Heart left ventricle (tissue), 16 donors: ENCODE measurements at regions of chr9 and their contacts with region 1.

Region 1: GRCh38 chr9:84261082-84261746 is 79.3 kb downstream of the SLC28A3 start:
- DNase-seq: peak; percentile 79 to 89 (median 83)
- ATAC-seq: peak; percentile 87 to 99 (median 97)
- H3K4me3 ChIP-seq: peak overlapping the region in 8 of 12 donors; percentile 1 to 49 (median 30)
- H3K27ac ChIP-seq: no peak overlapping the region
- H3K4me1 ChIP-seq: peaks cover 0 to 4% (median 0%) of the 10 kb centered on the region in 12 donors
- H3K27me3 ChIP-seq: no peaks in the 10 kb centered on the region
- CTCF ChIP-seq: peak; percentile 87 to 96 (median 92)
- POLR2A ChIP-seq: no peak

Region 2: GRCh38 chr9:83937911-83938323 is 323.3 kb before region 1 on chr9:
- intact Hi-C with region 1: loop called (anchors 1 to 5 kb)
- DNase-seq: no peak
- ATAC-seq: peak in 3 of 4 donors; percentile 58 to 74 (median 63)
- H3K4me3 ChIP-seq: no peak overlapping the region
- H3K27ac ChIP-seq: no peak overlapping the region
- H3K4me1 ChIP-seq: peaks cover 0 to 38% (median 5%) of the 10 kb centered on the region in 12 donors
- H3K27me3 ChIP-seq: no peaks in the 10 kb centered on the region
- CTCF ChIP-seq: peak; percentile 51 to 78 (median 71)
- POLR2A ChIP-seq: no peak

Region 3: DNA sequence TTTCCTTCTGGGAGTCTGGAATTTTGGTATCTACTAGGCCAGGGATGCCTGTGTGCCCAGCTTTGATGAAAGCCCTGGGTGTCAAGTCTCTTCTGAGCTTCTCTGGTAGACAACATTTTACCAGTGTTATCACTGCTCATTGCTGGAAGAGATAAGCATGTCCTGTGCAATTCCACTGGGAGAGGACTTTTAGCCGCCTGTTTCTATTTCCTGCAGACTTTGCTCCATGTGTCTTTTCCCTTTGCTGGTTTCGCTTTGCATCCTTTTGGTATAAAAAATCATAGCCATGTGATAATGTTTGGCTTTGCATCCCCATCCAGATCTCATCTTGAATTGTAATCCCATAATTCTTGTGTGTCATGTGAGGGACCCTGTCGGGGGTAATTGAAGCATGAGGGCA is 83.8 kb before region 1 on chr9:
- intact Hi-C with region 1: loop called in 6 of 10 experiments (anchors 1 to 10 kb)
- DNase-seq: no peak
- ATAC-seq: no peak
- H3K4me3 ChIP-seq: no peak overlapping the region
- H3K27ac ChIP-seq: no peak overlapping the region
- H3K4me1 ChIP-seq: peaks cover 0 to 20% (median 9%) of the 10 kb centered on the region in 12 donors
- H3K27me3 ChIP-seq: no peaks in the 10 kb centered on the region
- CTCF ChIP-seq: no peak
- POLR2A ChIP-seq: no peak

Region 4: GRCh38 chr9:84315278-84315877 is 54.2 kb after region 1 on chr9:
- intact Hi-C with region 1: loop called in 2 of 10 experiments (anchors 5 kb)
- DNase-seq: peak in 4 of 5 donors; percentile 34 to 48 (median 38)
- ATAC-seq: peak; percentile 30 to 66 (median 57)
- H3K4me3 ChIP-seq: no peak overlapping the region
- H3K27ac ChIP-seq: no peak overlapping the region
- H3K4me1 ChIP-seq: peaks cover 0 to 7% (median 0%) of the 10 kb centered on the region in 12 donors
- H3K27me3 ChIP-seq: no peaks in the 10 kb centered on the region
- CTCF ChIP-seq: peak; percentile 67 to 85 (median 76)
- POLR2A ChIP-seq: no peak